GM12878 (cell line): ENCODE measurements at regions of chr1 and their contacts with region 1.

Region 1: GRCh38 chr1:234212764-234213657 is 160.2 kb upstream of the COA6 start:
- DNase-seq: peak; percentile 28
- ATAC-seq: peak; percentile 55
- H3K4me3 ChIP-seq: no peak overlapping the region
- H3K27ac ChIP-seq: no peak overlapping the region
- H3K4me1 ChIP-seq: peaks cover 34% of the 10 kb centered on the region
- H3K27me3 ChIP-seq: no peaks in the 10 kb centered on the region
- CTCF ChIP-seq: peak; percentile 68 to 72 (median 68)
- EP300 ChIP-seq: no peak
- POLR2A ChIP-seq: no peak
- RAD21 ChIP-seq: peak; percentile 79

Region 2: DNA sequence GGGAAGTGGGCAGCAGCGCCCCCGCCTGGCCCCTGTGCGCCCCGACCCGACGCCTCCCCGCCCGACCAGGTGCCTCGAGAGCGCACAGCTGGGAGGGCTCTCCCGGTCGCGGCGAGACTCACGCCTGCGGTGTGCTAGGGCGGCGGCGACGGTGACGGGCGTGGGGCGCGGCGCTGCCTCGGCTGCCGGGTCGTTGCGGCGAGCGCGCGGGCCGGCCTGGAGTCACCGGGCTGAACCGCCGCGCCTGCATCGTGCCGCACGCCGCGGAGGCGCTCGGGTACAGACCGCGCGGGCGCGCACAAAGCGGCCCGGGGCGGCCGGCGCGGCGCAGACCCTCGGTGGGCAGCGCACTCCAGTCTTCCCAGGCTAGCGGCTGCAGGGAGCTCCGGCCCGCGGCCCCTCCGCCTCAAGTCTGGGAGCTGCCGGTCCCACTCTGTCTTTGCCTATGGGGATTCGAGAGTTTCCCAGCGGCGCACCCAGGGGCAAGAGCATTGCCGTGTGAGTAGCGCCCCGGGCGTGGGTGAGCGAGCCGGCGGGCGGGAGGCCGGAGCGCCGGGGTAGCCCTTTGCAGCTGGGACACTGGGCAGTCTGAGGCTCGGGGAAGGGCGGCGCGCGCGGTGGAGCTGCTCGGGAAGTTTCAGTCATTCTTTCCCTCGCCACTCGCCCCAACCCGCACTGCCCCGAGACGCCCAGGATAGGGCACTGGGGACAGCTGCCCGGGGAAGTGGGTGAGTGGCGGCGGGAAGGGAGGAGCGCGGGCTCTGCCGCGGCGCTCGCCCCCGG is 308.2 kb before region 1 on chr1 and contains the start of gene SLC35F3:
- CTCF ChIA-PET with region 1: no interaction called
- POLR2A ChIA-PET with region 1: no interaction called
- RAD21 ChIA-PET with region 1: no interaction called
- SMC1A ChIA-PET with region 1: no interaction called
- in situ Hi-C with region 1: no loop called
- intact Hi-C with region 1: no loop called
- DNase-seq: no peak
- ATAC-seq: no peak
- H3K4me3 ChIP-seq: no peak within 1 kb of the TSS
- H3K27ac ChIP-seq: no peak within 1 kb of the TSS
- H3K4me1 ChIP-seq: no peaks in the 10 kb centered on the region
- H3K27me3 ChIP-seq: peaks cover 2 to 13% of the 10 kb centered on the region in 2 experiments
- CTCF ChIP-seq: no peak
- EP300 ChIP-seq: no peak
- POLR2A ChIP-seq: no peak
- RAD21 ChIP-seq: no peak
- polyA plus RNA-seq, gene SLC35F3: 1.0 to 2.2 TPM

Region 3: DNA sequence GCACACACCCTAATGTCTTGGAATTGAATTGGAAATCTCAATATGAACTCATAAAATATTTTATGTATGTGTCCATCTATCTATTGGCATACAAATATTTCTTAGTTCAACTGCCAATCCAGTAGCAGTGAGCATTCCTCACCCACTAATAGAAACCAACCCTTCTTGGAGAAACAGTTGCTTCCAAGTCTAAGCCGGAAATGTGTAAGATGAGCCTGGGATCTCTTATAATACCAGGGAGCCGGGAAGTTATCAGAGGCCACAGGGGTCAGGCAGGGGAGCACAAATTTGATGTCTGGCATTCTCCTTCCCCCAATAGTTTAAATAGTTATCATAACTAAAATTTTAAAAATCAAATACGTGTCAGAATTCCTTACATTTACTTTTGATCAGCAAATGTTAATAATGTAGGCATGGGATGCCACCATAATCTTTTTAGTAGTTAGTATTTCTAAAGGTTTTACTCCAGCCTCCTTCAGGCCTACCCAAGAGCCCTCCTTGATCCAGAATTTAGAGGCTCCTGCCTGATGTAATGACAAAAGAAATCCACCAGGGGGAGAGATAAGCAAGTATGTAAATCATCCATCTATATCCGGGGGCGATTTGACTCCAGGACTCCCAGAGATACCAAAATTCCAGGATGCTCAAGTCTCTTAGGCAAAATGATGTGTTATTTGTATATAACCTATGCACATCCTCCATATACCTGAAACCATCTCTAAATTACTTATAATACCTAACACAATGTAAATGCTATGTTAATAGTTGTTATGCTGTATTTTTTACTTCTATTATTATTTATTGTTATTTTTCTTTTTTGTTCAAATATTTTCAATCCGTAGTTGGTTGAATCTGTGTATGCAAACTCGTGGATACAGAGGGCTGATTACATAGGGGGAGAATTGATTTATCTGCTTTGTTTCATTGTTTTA is 58.4 kb before region 1 on chr1:
- CTCF ChIA-PET with region 1: interaction called, 5 read pairs
- POLR2A ChIA-PET with region 1: no interaction called
- RAD21 ChIA-PET with region 1: no interaction called
- SMC1A ChIA-PET with region 1: interaction called, 3 read pairs
- in situ Hi-C with region 1: no loop called
- intact Hi-C with region 1: loop called (anchors 2 kb)
- DNase-seq: peak; percentile 20
- ATAC-seq: peak; percentile 86
- H3K4me3 ChIP-seq: no peak overlapping the region
- H3K27ac ChIP-seq: no peak overlapping the region
- H3K4me1 ChIP-seq: no peaks in the 10 kb centered on the region
- H3K27me3 ChIP-seq: no peaks in the 10 kb centered on the region; a peak in 1 of 4 replicates
- CTCF ChIP-seq: peak; percentile 70 to 76 (median 71)
- EP300 ChIP-seq: no peak
- POLR2A ChIP-seq: no peak
- RAD21 ChIP-seq: peak; percentile 88

Region 4: GRCh38 chr1:234246638-234247116 is 33.7 kb after region 1 on chr1:
- CTCF ChIA-PET with region 1: interaction called, 13 read pairs
- POLR2A ChIA-PET with region 1: no interaction called
- RAD21 ChIA-PET with region 1: interaction called, 7 read pairs
- SMC1A ChIA-PET with region 1: interaction called, 86 read pairs
- in situ Hi-C with region 1: no loop called
- intact Hi-C with region 1: loop called (anchors 1 kb)
- DNase-seq: peak; percentile 93
- ATAC-seq: peak; percentile 90
- H3K4me3 ChIP-seq: 0 out of 2 replicates have a peak overlapping the region, but pooled peaks have one; percentile 3
- H3K27ac ChIP-seq: peak overlapping the region; percentile 75
- H3K4me1 ChIP-seq: peaks cover 44% of the 10 kb centered on the region
- H3K27me3 ChIP-seq: no peaks in the 10 kb centered on the region
- CTCF ChIP-seq: no peak
- EP300 ChIP-seq: peak in 1 of 2 experiments; percentile 7; a peak in 2 of 4 replicates
- POLR2A ChIP-seq: no peak
- RAD21 ChIP-seq: no peak

Region 5: DNA sequence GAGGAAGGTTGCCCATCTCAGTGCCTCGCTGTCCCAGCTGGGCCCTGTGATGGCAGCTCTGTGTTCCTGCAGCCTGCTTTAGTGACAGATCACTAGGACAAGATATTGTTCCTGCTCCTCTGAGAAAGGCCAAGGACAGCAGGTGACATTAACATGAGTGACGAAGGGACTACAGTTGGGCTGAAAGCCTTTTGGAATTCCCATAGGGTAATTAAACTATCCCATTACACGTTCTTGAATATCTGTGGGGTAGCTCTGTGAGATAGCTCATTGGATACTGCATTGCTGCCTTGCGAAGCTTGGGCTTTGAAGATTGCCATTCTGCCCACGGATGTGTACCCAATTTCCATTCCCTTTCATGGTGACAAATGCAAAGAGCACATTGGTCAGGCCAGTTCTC is 82.1 kb after region 1 on chr1:
- CTCF ChIA-PET with region 1: interaction called, 11 read pairs
- POLR2A ChIA-PET with region 1: no interaction called
- RAD21 ChIA-PET with region 1: interaction called, 3 read pairs
- SMC1A ChIA-PET with region 1: interaction called, 3 read pairs
- in situ Hi-C with region 1: loop called (anchors 25 kb)
- intact Hi-C with region 1: no loop called
- DNase-seq: no peak
- ATAC-seq: no peak
- H3K4me3 ChIP-seq: no peak overlapping the region
- H3K27ac ChIP-seq: no peak overlapping the region
- H3K4me1 ChIP-seq: no peaks in the 10 kb centered on the region
- H3K27me3 ChIP-seq: no peaks in the 10 kb centered on the region
- CTCF ChIP-seq: no peak
- EP300 ChIP-seq: no peak
- POLR2A ChIP-seq: no peak
- RAD21 ChIP-seq: no peak

Region 6: DNA sequence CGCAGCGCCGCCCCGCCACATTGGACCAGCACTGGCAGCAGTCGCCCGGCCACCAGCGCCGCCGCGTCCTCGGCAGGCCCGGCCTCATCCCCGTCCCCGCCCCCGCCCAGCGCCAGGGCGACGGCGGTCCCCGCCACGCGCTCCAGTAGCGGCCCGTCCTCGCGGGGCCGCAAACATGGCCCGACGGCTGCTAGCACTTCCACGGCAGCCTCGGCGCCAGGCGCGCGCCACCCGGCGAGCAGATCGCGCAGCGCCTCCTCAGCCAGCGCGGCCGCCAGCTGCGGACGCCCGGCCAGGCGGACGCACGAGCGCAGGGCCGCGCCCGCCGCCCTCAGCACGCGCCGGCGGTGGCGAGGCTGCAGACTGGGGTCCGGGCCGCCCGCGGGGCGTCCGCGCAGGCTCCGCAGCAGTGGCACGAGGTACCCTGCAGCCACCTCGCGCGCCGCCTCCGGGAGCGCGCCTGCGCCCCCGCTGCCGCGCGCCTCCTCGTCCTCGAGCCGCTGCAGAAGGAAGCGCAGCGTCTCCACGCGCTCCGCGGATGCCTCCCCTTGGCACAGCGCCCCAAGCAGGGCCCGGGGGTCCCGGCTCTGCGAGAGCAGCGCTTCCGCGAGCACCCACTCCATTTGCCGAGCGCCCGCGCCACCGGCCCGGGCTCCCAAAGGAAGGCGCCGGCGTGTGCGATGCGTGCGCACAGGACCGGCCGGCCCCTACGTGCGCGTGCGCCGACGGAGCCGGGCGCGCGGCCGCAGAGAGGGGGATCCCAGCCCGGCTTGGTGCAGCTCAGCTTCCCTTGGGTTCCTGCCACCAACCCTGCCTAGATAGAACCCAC is 265.7 kb after region 1 on chr1 and contains the start of gene TARBP1:
- CTCF ChIA-PET with region 1: no interaction called
- POLR2A ChIA-PET with region 1: no interaction called
- RAD21 ChIA-PET with region 1: interaction called, 3 read pairs
- SMC1A ChIA-PET with region 1: no interaction called
- in situ Hi-C with region 1: no loop called
- intact Hi-C with region 1: loop called (anchors 10 kb)
- DNase-seq: no peak
- ATAC-seq: peak; percentile 83
- H3K4me3 ChIP-seq: peak within 1 kb of the TSS; percentile 96
- H3K27ac ChIP-seq: peak within 1 kb of the TSS; percentile 78
- H3K4me1 ChIP-seq: peaks cover 25% of the 10 kb centered on the region
- H3K27me3 ChIP-seq: no peaks in the 10 kb centered on the region
- CTCF ChIP-seq: peak; percentile 12 to 41 (median 24); a peak in 3 of 6 replicates
- EP300 ChIP-seq: no peak
- POLR2A ChIP-seq: peak; percentile 74
- RAD21 ChIP-seq: no peak
- polyA plus RNA-seq, gene TARBP1: 22.0 to 26.2 TPM